ENCODE measurements at regions of chr14 and their contacts with region 1.

Region 1: DNA sequence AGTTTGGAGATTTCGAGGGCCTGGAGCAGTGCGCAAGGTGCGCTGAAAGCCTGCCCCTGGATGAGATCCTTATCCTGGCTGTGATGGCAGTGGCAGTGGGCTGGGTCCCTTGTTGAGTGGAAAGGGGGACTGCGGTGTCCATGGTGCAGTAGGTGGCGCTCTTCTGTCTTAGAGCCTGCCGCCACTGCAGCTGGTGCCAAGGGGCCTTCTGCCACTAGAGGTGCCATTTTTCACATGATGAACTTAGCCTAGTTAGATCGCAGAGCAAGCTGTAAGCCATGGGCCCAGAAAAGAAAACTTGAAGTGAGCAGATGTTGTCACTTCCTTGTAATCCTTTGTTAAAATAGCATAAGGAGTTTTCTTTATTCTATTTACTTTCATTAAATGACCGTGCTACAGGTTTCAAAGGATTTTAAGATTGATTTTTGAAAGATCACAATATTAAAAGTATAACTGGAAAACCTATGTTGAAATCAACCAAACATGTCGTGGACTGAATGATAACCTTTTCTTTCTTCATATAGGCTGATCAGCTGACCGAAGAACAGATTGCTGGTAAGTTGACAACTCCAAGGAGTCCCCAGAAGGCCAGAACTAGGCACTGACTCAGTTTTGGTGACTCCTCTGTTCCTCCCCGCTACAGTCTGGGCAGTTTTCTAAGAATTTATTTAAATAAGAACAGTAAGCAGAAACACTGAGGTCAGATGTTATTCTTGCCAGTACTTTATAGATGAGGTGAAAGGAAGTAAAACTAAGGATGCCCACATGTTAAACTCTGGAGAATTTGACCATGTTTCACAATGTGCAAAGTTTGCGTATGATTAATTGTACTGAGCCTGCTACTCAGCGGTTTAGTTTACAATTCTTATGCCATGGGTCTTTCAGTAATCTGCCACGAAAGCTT is 3.0 kb downstream of the CALM1 start:
- DNase-seq: peak; percentile 82 to 90
- H3K4me3 ChIP-seq: no peak overlapping the region
- H3K4me3 Mint-ChIP-seq: peak overlapping the region; percentile 57
- H3K27ac Mint-ChIP-seq: no peak overlapping the region
- H3K4me1 ChIP-seq: peaks cover 12% of the 10 kb centered on the region
- H3K4me1 Mint-ChIP-seq: no peaks in the 10 kb centered on the region
- H3K27me3 ChIP-seq: no peaks in the 10 kb centered on the region
- H3K27me3 Mint-ChIP-seq: no peaks in the 10 kb centered on the region
- CTCF ChIP-seq: peak; percentile 96 to 98

Region 2: GRCh38 chr14:90301668-90302090 is 98.1 kb before region 1 on chr14:
- CTCF ChIA-PET with region 1: interaction called, 4 read pairs
- POLR2A ChIA-PET with region 1: no interaction called
- intact Hi-C with region 1: loop called (anchors 1 kb)
- DNase-seq: peak in 1 of 2 experiments; percentile 11
- H3K4me3 ChIP-seq: no peak overlapping the region
- H3K4me3 Mint-ChIP-seq: no peak overlapping the region
- H3K27ac Mint-ChIP-seq: no peak overlapping the region
- H3K4me1 ChIP-seq: no peaks in the 10 kb centered on the region
- H3K4me1 Mint-ChIP-seq: no peaks in the 10 kb centered on the region
- H3K27me3 ChIP-seq: no peaks in the 10 kb centered on the region
- H3K27me3 Mint-ChIP-seq: no peaks in the 10 kb centered on the region
- CTCF ChIP-seq: peak in 1 of 2 experiments; percentile 38

Region 3: GRCh38 chr14:90383075-90383730 is 16.6 kb before region 1 on chr14:
- CTCF ChIA-PET with region 1: interaction called, 5 read pairs
- POLR2A ChIA-PET with region 1: interaction called, 7 read pairs
- intact Hi-C with region 1: loop called (anchors 1 kb)
- DNase-seq: peak; percentile 99
- H3K4me3 ChIP-seq: peak overlapping the region; percentile 60
- H3K4me3 Mint-ChIP-seq: no peak overlapping the region
- H3K27ac Mint-ChIP-seq: no peak overlapping the region
- H3K4me1 ChIP-seq: peaks cover 22% of the 10 kb centered on the region
- H3K4me1 Mint-ChIP-seq: peaks cover 7% of the 10 kb centered on the region
- H3K27me3 ChIP-seq: no peaks in the 10 kb centered on the region
- H3K27me3 Mint-ChIP-seq: no peaks in the 10 kb centered on the region
- CTCF ChIP-seq: peak in 1 of 2 experiments; percentile 9

Region 4: DNA sequence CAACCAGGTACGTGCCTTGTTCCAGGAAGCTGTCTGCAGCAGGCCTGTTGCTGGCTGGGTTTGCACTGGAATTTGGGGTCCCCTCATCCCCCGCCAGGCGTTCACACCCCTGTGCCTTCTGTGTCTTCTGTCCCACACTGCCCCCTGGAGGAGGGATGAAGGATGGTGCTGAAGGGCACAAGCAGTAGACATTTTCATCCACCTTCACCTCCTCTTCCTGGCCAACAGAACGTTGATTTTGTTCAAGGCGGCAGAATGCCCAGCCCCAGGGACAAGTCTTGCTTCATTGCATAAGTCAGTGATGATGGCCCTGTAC is 119.1 kb after region 1 on chr14:
- CTCF ChIA-PET with region 1: interaction called, 21 read pairs
- POLR2A ChIA-PET with region 1: interaction called, 7 read pairs
- intact Hi-C with region 1: loop called (anchors 1 kb)
- DNase-seq: peak in 1 of 2 experiments; percentile 54
- H3K4me3 ChIP-seq: no peak overlapping the region
- H3K4me3 Mint-ChIP-seq: no peak overlapping the region
- H3K27ac Mint-ChIP-seq: no peak overlapping the region
- H3K4me1 ChIP-seq: peaks cover 51% of the 10 kb centered on the region
- H3K4me1 Mint-ChIP-seq: peaks cover 19% of the 10 kb centered on the region
- H3K27me3 ChIP-seq: no peaks in the 10 kb centered on the region
- H3K27me3 Mint-ChIP-seq: no peaks in the 10 kb centered on the region
- CTCF ChIP-seq: peak; percentile 23 to 45

Region 5: GRCh38 chr14:90599748-90600507 is 200.1 kb after region 1 on chr14:
- CTCF ChIA-PET with region 1: interaction called, 13 read pairs
- POLR2A ChIA-PET with region 1: interaction called, 4 read pairs
- intact Hi-C with region 1: loop called (anchors 1 kb)
- DNase-seq: peak in 1 of 2 experiments; percentile 25
- H3K4me3 ChIP-seq: no peak overlapping the region
- H3K4me3 Mint-ChIP-seq: no peak overlapping the region
- H3K27ac Mint-ChIP-seq: peak overlapping the region; percentile 48
- H3K4me1 ChIP-seq: no peaks in the 10 kb centered on the region
- H3K4me1 Mint-ChIP-seq: no peaks in the 10 kb centered on the region
- H3K27me3 ChIP-seq: no peaks in the 10 kb centered on the region
- H3K27me3 Mint-ChIP-seq: no peaks in the 10 kb centered on the region
- CTCF ChIP-seq: peak in 1 of 2 experiments; percentile 39

Region 6: GRCh38 chr14:91021991-91022621 is 622.3 kb after region 1 on chr14:
- CTCF ChIA-PET with region 1: no interaction called
- POLR2A ChIA-PET with region 1: no interaction called
- intact Hi-C with region 1: no loop called
- DNase-seq: no peak
- H3K4me3 ChIP-seq: no peak overlapping the region
- H3K4me3 Mint-ChIP-seq: no peak overlapping the region
- H3K27ac Mint-ChIP-seq: no peak overlapping the region
- H3K4me1 ChIP-seq: no peaks in the 10 kb centered on the region
- H3K4me1 Mint-ChIP-seq: no peaks in the 10 kb centered on the region
- H3K27me3 ChIP-seq: no peaks in the 10 kb centered on the region
- H3K27me3 Mint-ChIP-seq: no peaks in the 10 kb centered on the region
- CTCF ChIP-seq: no peak

Measured in Caco-2 (cell line).